ENCODE measurements at regions of chr14 and their contacts with region 1.

Region 1: GRCh38 chr14:72516936-72517700 is 376.8 kb downstream of the DPF3 start:
- DNase-seq: peak; percentile 83
- H3K4me3 ChIP-seq: no peak overlapping the region
- H3K27ac ChIP-seq: no peak overlapping the region
- H3K4me1 ChIP-seq: peaks cover 6% of the 10 kb centered on the region
- H3K27me3 ChIP-seq: peaks cover 2 to 3% of the 10 kb centered on the region in 2 experiments
- CTCF ChIP-seq: peak; percentile 84 to 88
- POLR2A ChIP-seq: no peak

Region 2: GRCh38 chr14:72528059-72528862 is 11.1 kb after region 1 on chr14:
- CTCF ChIA-PET with region 1: interaction called, 19 read pairs
- POLR2A ChIA-PET with region 1: no interaction called
- dilution Hi-C with region 1: no loop called
- intact Hi-C with region 1: no loop called
- DNase-seq: no peak
- H3K4me3 ChIP-seq: no peak overlapping the region
- H3K27ac ChIP-seq: no peak overlapping the region
- H3K4me1 ChIP-seq: peaks cover 10% of the 10 kb centered on the region
- H3K27me3 ChIP-seq: no peaks in the 10 kb centered on the region
- CTCF ChIP-seq: no peak
- POLR2A ChIP-seq: no peak

Region 3: DNA sequence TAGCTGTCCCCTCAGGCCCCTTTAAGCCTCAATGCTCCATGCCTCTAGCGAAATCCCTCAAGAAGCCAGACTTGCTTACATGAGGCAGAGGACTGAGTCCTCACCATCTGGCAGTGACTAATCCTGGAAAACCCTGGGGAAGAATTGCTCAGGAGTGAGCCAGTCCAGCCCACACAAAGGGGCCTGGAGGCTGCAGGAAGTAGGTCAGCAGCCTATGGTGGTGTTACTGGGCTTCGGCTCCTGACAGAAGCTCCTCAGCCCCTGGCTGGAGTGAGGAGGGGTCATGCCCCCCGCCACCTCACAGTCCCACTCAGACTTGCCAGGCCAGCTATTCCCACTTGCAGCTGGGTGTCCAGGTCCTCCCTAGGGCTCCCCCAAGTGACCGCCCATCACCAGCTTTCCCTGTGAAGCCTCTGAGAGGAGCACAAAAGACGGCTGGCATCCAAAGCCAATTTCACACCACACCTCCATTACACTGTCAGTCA is 126.2 kb after region 1 on chr14:
- CTCF ChIA-PET with region 1: interaction called, 13 read pairs
- POLR2A ChIA-PET with region 1: no interaction called
- dilution Hi-C with region 1: no loop called
- intact Hi-C with region 1: loop called (anchors 1 kb)
- DNase-seq: peak; percentile 96
- H3K4me3 ChIP-seq: no peak overlapping the region
- H3K27ac ChIP-seq: peak overlapping the region; percentile 96
- H3K4me1 ChIP-seq: peaks cover 31% of the 10 kb centered on the region
- H3K27me3 ChIP-seq: no peaks in the 10 kb centered on the region
- CTCF ChIP-seq: peak in 1 of 2 donors; percentile 8
- POLR2A ChIP-seq: peak; percentile 47

Region 4: DNA sequence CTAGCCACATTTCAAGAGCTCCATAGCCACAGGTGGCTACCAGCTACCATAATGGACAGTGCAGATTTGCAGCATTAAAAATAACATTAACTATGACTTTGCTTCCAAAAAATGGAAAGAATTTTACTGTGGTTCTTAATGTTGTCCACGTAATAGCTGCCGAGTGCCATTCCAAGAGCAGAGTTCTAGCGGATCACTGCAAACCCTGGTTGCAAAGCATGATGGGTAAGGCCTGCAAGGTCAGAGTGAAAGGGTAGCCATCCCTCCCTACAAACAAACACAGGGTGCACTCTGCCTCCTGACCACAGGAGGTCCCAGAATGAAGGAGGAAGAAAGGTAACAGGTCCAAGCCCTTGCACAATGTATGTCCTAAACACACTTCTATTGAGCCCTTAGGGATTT is 219.2 kb after region 1 on chr14:
- CTCF ChIA-PET with region 1: interaction called, 7 read pairs
- POLR2A ChIA-PET with region 1: no interaction called
- dilution Hi-C with region 1: no loop called
- intact Hi-C with region 1: loop called (anchors 10 kb)
- DNase-seq: no peak
- H3K4me3 ChIP-seq: no peak overlapping the region
- H3K27ac ChIP-seq: no peak overlapping the region
- H3K4me1 ChIP-seq: no peaks in the 10 kb centered on the region
- H3K27me3 ChIP-seq: no peaks in the 10 kb centered on the region
- CTCF ChIP-seq: no peak
- POLR2A ChIP-seq: no peak

Region 5: DNA sequence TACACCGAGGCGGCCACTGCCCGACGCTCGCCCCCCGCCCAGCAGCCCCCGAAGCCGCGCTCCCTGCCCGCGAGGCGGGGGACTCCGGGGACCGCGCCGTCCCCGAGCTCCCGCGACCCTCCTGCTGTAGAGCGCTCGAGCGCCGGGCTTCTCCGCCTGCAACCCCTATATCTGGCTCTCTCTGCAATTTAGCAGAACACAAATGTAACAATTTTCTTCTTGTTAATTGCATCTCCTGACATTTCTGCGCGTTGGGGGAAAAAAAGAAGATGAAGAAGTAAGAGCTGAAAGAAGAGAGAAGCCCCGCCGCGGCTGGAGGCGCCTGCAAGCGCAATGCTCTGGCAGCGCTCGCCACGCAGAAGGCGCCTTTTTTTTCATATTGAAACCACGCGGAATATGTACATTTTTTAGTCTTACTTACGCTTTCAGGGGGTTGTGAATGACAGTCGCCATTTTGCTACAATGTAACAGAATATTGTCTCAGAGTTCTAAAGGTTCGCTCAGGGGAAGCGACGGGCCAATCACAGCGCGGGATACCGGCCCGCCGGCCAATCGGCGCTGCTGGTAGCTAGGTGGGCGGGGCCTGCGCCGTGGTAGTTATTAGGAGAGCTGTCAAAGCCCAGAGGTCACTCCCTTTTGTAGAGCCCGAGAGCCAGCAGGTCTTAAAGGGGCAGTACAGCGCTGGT is 376.7 kb after region 1 on chr14 and contains the start of gene DPF3:
- CTCF ChIA-PET with region 1: interaction called, 44 read pairs
- POLR2A ChIA-PET with region 1: no interaction called
- dilution Hi-C with region 1: no loop called
- intact Hi-C with region 1: loop called (anchors 2 kb)
- DNase-seq: peak; percentile 97
- H3K4me3 ChIP-seq: peak within 1 kb of the TSS; percentile 72 to 99 (median 92)
- H3K27ac ChIP-seq: peak within 1 kb of the TSS; percentile 66
- H3K4me1 ChIP-seq: peaks cover 27% of the 10 kb centered on the region
- H3K27me3 ChIP-seq: no peaks in the 10 kb centered on the region
- CTCF ChIP-seq: no peak
- POLR2A ChIP-seq: peak; percentile 44
- total RNA-seq, gene DPF3: 3.5 and 8.1 TPM in 2 replicates

Region 6: DNA sequence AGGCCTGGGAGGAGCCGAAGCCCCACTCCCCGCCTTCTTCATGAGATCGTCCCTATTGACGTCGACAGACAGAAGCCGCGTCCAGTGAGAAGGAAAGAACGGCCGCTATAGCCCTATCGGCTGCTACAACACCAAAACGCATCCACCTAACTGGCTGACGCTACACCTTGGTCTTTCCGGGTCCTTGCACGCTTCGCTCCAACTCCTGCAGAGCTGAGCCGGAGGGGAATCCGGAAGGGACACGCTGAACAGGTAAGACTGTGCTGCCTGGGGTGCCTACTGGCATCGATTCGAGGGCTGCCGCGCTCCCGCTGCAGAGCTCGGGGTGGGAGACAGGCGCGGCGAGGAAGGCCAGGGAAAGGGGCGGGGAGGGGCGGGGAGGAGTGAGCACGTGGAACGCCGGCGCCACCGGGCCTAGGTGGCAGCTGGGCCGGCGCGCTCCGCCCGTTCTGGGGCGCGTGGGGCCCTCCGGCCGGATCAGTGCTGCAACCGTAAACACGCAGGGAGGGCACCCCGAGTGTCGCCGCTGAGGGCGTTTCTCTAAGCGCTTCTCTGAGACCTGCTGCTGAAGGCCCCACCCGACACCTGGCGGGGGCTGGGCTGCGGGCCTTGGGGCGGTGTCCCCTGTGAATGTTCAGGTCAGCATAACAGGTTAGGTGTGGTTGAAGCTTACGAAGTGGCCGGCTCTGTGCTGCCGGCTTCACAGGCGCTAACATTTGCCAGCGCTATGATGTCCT is 409.3 kb after region 1 on chr14 and contains the start of gene DCAF4:
- CTCF ChIA-PET with region 1: interaction called, 31 read pairs
- POLR2A ChIA-PET with region 1: no interaction called
- dilution Hi-C with region 1: no loop called
- intact Hi-C with region 1: no loop called
- DNase-seq: peak; percentile 98
- H3K4me3 ChIP-seq: peak within 1 kb of the TSS; percentile 67 to 89 (median 71)
- H3K27ac ChIP-seq: peak within 1 kb of the TSS; percentile 71
- H3K4me1 ChIP-seq: peaks cover 10% of the 10 kb centered on the region
- H3K27me3 ChIP-seq: no peaks in the 10 kb centered on the region
- CTCF ChIP-seq: no peak
- POLR2A ChIP-seq: no peak
- total RNA-seq, gene DCAF4: 8.6 and 14.5 TPM in 2 replicates

Region 7: GRCh38 chr14:72957213-72957612 is 440.1 kb after region 1 on chr14:
- CTCF ChIA-PET with region 1: interaction called, 751 read pairs
- POLR2A ChIA-PET with region 1: no interaction called
- dilution Hi-C with region 1: no loop called
- intact Hi-C with region 1: no loop called
- DNase-seq: no peak
- H3K4me3 ChIP-seq: no peak overlapping the region
- H3K27ac ChIP-seq: no peak overlapping the region
- H3K4me1 ChIP-seq: no peaks in the 10 kb centered on the region
- H3K27me3 ChIP-seq: no peaks in the 10 kb centered on the region
- CTCF ChIP-seq: no peak
- POLR2A ChIP-seq: no peak